CD14-positive monocyte (primary cell): ENCODE measurements at regions of chr12 and their contacts with region 1.

Region 1: DNA sequence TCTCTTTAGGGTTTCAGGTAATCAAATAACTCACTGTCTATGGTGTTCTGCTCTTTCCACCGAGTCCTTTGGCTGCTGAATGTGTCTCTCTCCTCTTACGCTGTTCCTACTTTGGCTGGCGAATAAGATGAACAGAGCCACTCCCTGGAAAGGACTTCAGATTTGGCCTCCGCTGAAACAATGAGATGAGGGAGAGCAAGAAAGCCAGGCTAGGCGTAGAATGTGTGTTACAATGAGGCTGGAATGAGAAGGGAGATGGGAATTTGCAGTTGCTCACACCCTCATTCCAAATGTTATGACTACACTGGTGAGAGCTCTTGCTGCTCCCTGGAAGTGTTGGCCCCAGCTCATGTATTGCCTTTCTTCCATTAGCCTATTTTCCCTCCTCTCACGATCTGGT is at the start of gene MFAP5:
- DNase-seq: no peak
- H3K4me3 ChIP-seq: no peak within 1 kb of the TSS
- H3K4me3 Mint-ChIP-seq: no peak within 1 kb of the TSS
- H3K27ac ChIP-seq: no peak within 1 kb of the TSS
- H3K27ac Mint-ChIP-seq: no peak within 1 kb of the TSS
- H3K4me1 ChIP-seq: peaks cover 10 to 15% of the 10 kb centered on the region in 2 donors
- H3K4me1 Mint-ChIP-seq: peaks cover 10% of the 10 kb centered on the region
- H3K27me3 ChIP-seq: no peaks in the 10 kb centered on the region
- H3K27me3 Mint-ChIP-seq: peaks cover 0 to 5% (median 3%) of the 10 kb centered on the region in 3 donors
- CTCF ChIP-seq: no peak
- polyA plus RNA-seq, gene MFAP5: not detected

Region 2: GRCh38 chr12:7289743-7290142 is 1372.8 kb before region 1 on chr12:
- intact Hi-C with region 1: no loop called
- DNase-seq: no peak
- H3K4me3 ChIP-seq: no peak overlapping the region
- H3K4me3 Mint-ChIP-seq: no peak overlapping the region
- H3K27ac ChIP-seq: no peak overlapping the region
- H3K27ac Mint-ChIP-seq: no peak overlapping the region
- H3K4me1 ChIP-seq: no peaks in the 10 kb centered on the region
- H3K4me1 Mint-ChIP-seq: no peaks in the 10 kb centered on the region
- H3K27me3 ChIP-seq: no peaks in the 10 kb centered on the region
- H3K27me3 Mint-ChIP-seq: peaks cover 0 to 5% (median 0%) of the 10 kb centered on the region in 3 donors
- CTCF ChIP-seq: no peak

Region 3: DNA sequence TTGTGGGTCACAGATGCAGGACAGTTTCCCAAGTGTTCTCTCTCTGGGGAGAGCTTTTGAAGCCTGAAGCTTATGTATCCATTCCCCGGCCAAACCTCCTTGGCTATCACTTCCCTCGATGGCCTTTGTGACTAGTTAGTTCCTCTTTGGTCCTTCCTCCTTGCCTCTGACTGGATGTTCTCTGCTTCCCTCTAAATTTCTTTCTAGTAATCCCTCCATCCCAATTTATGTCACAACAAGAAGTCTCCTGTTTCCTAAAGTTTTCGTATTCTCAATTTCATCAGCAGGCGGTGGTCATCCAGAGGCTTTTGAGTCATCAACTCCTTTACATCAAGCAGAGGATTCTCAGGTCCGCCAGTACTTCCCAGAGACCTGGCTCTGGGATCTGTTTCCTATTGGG is 187.3 kb after region 1 on chr12:
- intact Hi-C with region 1: loop called in 1 of 2 experiments (anchors 10 kb)
- DNase-seq: peak; percentile 31 to 63 (median 55)
- H3K4me3 ChIP-seq: no peak overlapping the region
- H3K4me3 Mint-ChIP-seq: no peak overlapping the region
- H3K27ac ChIP-seq: no peak overlapping the region
- H3K27ac Mint-ChIP-seq: peak overlapping the region in 2 of 7 donors; percentile 9 to 79
- H3K4me1 ChIP-seq: peaks cover 23 to 30% of the 10 kb centered on the region in 2 donors
- H3K4me1 Mint-ChIP-seq: peaks cover 27% of the 10 kb centered on the region
- H3K27me3 ChIP-seq: no peaks in the 10 kb centered on the region
- H3K27me3 Mint-ChIP-seq: peaks cover 1 to 7% (median 5%) of the 10 kb centered on the region in 3 donors
- CTCF ChIP-seq: no peak

Region 4: GRCh38 chr12:8887285-8887715 is 224.7 kb after region 1 on chr12:
- intact Hi-C with region 1: loop called in 1 of 2 experiments (anchors 10 kb)
- DNase-seq: no peak
- H3K4me3 ChIP-seq: no peak overlapping the region
- H3K4me3 Mint-ChIP-seq: no peak overlapping the region
- H3K27ac ChIP-seq: no peak overlapping the region
- H3K27ac Mint-ChIP-seq: no peak overlapping the region
- H3K4me1 ChIP-seq: peaks cover 2 to 4% of the 10 kb centered on the region in 2 donors
- H3K4me1 Mint-ChIP-seq: peaks cover 5% of the 10 kb centered on the region
- H3K27me3 ChIP-seq: no peaks in the 10 kb centered on the region
- H3K27me3 Mint-ChIP-seq: peaks cover 1 to 4% (median 1%) of the 10 kb centered on the region in 3 donors
- CTCF ChIP-seq: no peak

Region 5: GRCh38 chr12:9049520-9050133 is 387.0 kb after region 1 on chr12:
- intact Hi-C with region 1: loop called in 1 of 2 experiments (anchors 10 kb)
- DNase-seq: peak; percentile 39 to 51 (median 41)
- H3K4me3 ChIP-seq: no peak overlapping the region
- H3K4me3 Mint-ChIP-seq: no peak overlapping the region
- H3K27ac ChIP-seq: no peak overlapping the region
- H3K27ac Mint-ChIP-seq: no peak overlapping the region
- H3K4me1 ChIP-seq: peaks cover 0 to 5% of the 10 kb centered on the region in 2 donors
- H3K4me1 Mint-ChIP-seq: peaks cover 9% of the 10 kb centered on the region
- H3K27me3 ChIP-seq: no peaks in the 10 kb centered on the region
- H3K27me3 Mint-ChIP-seq: peaks cover 0 to 2% (median 0%) of the 10 kb centered on the region in 3 donors
- CTCF ChIP-seq: peak; percentile 73